Heart left ventricle (tissue), 16 donors: ENCODE measurements at regions of chr15 and their contacts with region 1.

Region 1: GRCh38 chr15:65824031-65824743 is 32.1 kb upstream of the DENND4A start:
- DNase-seq: peak in 3 of 5 donors; percentile 36 to 55 (median 39)
- ATAC-seq: peak in 3 of 4 donors; percentile 81 to 97 (median 92)
- H3K4me3 ChIP-seq: no peak overlapping the region
- H3K27ac ChIP-seq: no peak overlapping the region
- H3K4me1 ChIP-seq: peaks cover 0 to 51% (median 0%) of the 10 kb centered on the region in 12 donors
- H3K27me3 ChIP-seq: no peaks in the 10 kb centered on the region
- CTCF ChIP-seq: peak; percentile 24 to 79 (median 52)
- POLR2A ChIP-seq: no peak

Region 2: GRCh38 chr15:65773386-65774111 is 50.6 kb before region 1 on chr15:
- intact Hi-C with region 1: loop called in 1 of 10 experiments (anchors 10 kb)
- DNase-seq: no peak
- ATAC-seq: no peak
- H3K4me3 ChIP-seq: no peak overlapping the region
- H3K27ac ChIP-seq: no peak overlapping the region
- H3K4me1 ChIP-seq: peaks cover 0 to 43% (median 0%) of the 10 kb centered on the region in 12 donors
- H3K27me3 ChIP-seq: no peaks in the 10 kb centered on the region
- CTCF ChIP-seq: no peak
- POLR2A ChIP-seq: no peak